ENCODE measurements at regions of chr2 and their contacts with region 1.

Region 1: GRCh38 chr2:132853128-132853527 is 183.1 kb upstream of the LYPD1 start:
- DNase-seq: no peak
- H3K4me3 ChIP-seq: no peak overlapping the region
- H3K4me3 Mint-ChIP-seq: no peak overlapping the region
- H3K27ac Mint-ChIP-seq: no peak overlapping the region
- H3K4me1 ChIP-seq: no peaks in the 10 kb centered on the region
- H3K4me1 Mint-ChIP-seq: no peaks in the 10 kb centered on the region
- H3K27me3 ChIP-seq: no peaks in the 10 kb centered on the region
- H3K27me3 Mint-ChIP-seq: no peaks in the 10 kb centered on the region
- CTCF ChIP-seq: peak in 1 of 2 experiments; percentile 13

Region 2: GRCh38 chr2:132676999-132677398 is 176.1 kb before region 1 on chr2:
- CTCF ChIA-PET with region 1: no interaction called
- POLR2A ChIA-PET with region 1: no interaction called
- intact Hi-C with region 1: loop called (anchors 1 kb)
- DNase-seq: no peak
- H3K4me3 ChIP-seq: no peak overlapping the region
- H3K4me3 Mint-ChIP-seq: no peak overlapping the region
- H3K27ac Mint-ChIP-seq: no peak overlapping the region
- H3K4me1 ChIP-seq: peaks cover 8% of the 10 kb centered on the region; the same call in 1 of the 2 replicates
- H3K4me1 Mint-ChIP-seq: no peaks in the 10 kb centered on the region
- H3K27me3 ChIP-seq: no peaks in the 10 kb centered on the region
- H3K27me3 Mint-ChIP-seq: peaks cover 5% of the 10 kb centered on the region
- CTCF ChIP-seq: peak; percentile 7 to 27